Endothelial cell of umbilical vein (primary cell): ENCODE measurements at regions of chr1 and their contacts with region 1.

Region 1: DNA sequence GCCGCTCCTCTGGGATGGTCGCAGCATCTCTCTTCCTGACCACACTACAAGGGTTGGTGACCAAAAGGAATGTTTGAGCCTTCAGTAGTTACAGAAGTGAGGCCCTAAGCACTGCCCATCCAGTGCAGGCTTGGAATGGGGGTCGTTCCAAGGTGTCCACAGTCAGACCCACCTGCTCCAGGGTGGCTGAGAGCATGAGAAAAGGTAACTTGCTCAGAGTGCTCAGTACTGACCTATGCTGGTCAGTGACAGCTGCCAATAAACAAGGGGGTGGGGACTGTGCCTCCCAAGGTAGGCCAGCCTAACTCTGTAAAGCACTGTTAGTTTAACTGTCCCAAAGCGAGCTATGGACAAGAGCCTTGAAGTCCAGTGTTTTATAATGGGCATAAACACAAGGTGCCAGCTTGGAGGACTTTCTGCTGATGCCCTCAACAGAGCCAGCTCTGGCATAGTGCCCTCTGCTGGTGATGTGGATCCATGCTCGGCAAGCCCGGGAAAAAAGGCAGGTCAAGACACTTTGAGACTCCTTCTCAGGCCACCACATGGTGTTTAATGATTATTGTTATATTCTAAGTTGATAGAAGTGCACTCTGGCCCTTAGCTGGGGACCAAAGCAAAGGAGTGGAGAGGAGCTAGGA is 78.1 kb upstream of the DNAH14 start:
- DNase-seq: peak; percentile 50
- H3K4me3 ChIP-seq: no peak overlapping the region
- H3K27ac ChIP-seq: no peak overlapping the region
- H3K4me1 ChIP-seq: no peaks in the 10 kb centered on the region
- H3K27me3 ChIP-seq: no peaks in the 10 kb centered on the region
- CTCF ChIP-seq: peak; percentile 75 to 83
- POLR2A ChIP-seq: no peak

Region 2: DNA sequence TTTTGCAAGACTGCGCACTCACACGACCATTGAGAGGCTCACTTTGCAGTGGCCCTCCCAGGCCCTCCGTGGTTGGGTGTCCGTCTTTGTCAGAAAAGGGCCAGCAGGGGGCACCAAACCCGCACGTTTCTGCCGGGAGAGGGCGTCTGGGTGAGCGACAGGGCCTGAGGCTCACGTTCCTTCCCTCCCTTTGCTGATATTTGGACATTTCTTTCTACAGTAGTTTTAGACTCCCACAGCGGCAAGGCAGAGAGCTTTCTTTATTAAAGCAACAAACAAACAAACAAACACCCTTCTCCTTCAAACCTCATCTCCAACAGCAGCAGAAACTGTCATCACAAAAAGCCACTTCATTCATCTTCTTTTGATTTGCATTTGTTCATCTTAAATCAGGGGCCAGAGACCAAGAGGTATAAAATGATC is 337.5 kb before region 1 on chr1:
- CTCF ChIA-PET with region 1: interaction called, 299 read pairs
- POLR2A ChIA-PET with region 1: no interaction called
- dilution Hi-C with region 1: no loop called
- intact Hi-C with region 1: loop called (anchors 1 kb)
- DNase-seq: peak; percentile 77
- H3K4me3 ChIP-seq: no peak overlapping the region
- H3K27ac ChIP-seq: no peak overlapping the region
- H3K4me1 ChIP-seq: no peaks in the 10 kb centered on the region
- H3K27me3 ChIP-seq: no peaks in the 10 kb centered on the region
- CTCF ChIP-seq: peak; percentile 87 to 92
- POLR2A ChIP-seq: no peak

Region 3: GRCh38 chr1:224644553-224645154 is 206.7 kb before region 1 on chr1:
- CTCF ChIA-PET with region 1: interaction called, 20 read pairs
- POLR2A ChIA-PET with region 1: no interaction called
- dilution Hi-C with region 1: no loop called
- intact Hi-C with region 1: loop called (anchors 1 kb)
- DNase-seq: peak; percentile 54
- H3K4me3 ChIP-seq: no peak overlapping the region
- H3K27ac ChIP-seq: no peak overlapping the region
- H3K4me1 ChIP-seq: peaks cover under 1% of the 10 kb centered on the region
- H3K27me3 ChIP-seq: no peaks in the 10 kb centered on the region
- CTCF ChIP-seq: peak; percentile 72 to 76
- POLR2A ChIP-seq: no peak

Region 4: GRCh38 chr1:224863970-224864369 is 12.6 kb after region 1 on chr1:
- CTCF ChIA-PET with region 1: interaction called, 26 read pairs
- POLR2A ChIA-PET with region 1: no interaction called
- dilution Hi-C with region 1: no loop called
- intact Hi-C with region 1: no loop called
- DNase-seq: no peak
- H3K4me3 ChIP-seq: no peak overlapping the region
- H3K27ac ChIP-seq: no peak overlapping the region
- H3K4me1 ChIP-seq: no peaks in the 10 kb centered on the region
- H3K27me3 ChIP-seq: no peaks in the 10 kb centered on the region
- CTCF ChIP-seq: no peak
- POLR2A ChIP-seq: no peak

Region 5: DNA sequence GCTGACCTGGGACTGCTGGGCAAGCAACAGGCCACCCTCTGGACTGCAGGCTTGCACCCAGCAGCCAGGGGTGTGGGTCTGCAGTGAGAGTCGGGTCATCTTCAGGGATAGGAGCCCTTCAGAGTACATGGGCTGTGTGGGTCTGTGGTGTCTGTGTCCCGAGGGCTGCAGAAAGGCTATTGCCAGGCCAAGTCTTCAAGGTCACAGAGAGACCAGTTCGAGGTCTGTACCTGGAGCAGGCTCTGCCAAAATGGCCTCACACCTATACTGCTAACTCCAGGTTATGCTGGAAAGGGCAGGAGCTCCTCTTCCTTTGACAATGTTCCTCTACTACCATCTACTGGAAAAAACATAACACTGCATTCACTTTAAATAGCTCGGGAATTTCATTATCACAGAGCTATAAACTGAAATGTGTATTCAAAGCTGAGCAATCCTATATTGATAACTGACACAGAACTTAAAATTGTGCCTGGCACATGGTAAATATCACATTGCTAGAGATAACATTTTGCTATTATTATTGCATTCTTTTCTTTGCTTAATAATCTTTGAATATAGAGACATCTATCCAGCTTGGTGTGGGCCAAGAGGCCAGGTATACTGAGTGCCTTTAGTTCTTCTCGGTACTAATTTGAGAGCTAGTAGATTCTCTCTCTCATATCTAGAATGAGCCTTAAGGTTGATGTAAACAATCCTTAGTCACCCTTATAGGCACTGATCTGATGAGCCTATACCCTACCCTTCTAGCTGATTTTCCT is 71.3 kb after region 1 on chr1:
- CTCF ChIA-PET with region 1: interaction called, 20 read pairs
- POLR2A ChIA-PET with region 1: no interaction called
- dilution Hi-C with region 1: no loop called
- intact Hi-C with region 1: loop called (anchors 5 kb)
- DNase-seq: peak; percentile 24
- H3K4me3 ChIP-seq: no peak overlapping the region
- H3K27ac ChIP-seq: no peak overlapping the region
- H3K4me1 ChIP-seq: no peaks in the 10 kb centered on the region
- H3K27me3 ChIP-seq: peaks cover 0 to 4% of the 10 kb centered on the region in 2 experiments
- CTCF ChIP-seq: peak; percentile 44 to 45
- POLR2A ChIP-seq: no peak